Breast epithelium (tissue), 4 donors: ENCODE measurements at regions of chr6 and their contacts with region 1.

Region 1: GRCh38 chr6:168715643-168716481 is 274.9 kb downstream of the SMOC2 start:
- DNase-seq: no peak
- H3K4me3 ChIP-seq: no peak overlapping the region
- H3K27ac ChIP-seq: no peak overlapping the region
- H3K4me1 ChIP-seq: no peaks in the 10 kb centered on the region
- H3K27me3 ChIP-seq: no peaks in the 10 kb centered on the region
- CTCF ChIP-seq: no peak
- POLR2A ChIP-seq: no peak

Region 2: GRCh38 chr6:169064194-169064593 is 348.3 kb after region 1 on chr6:
- intact Hi-C with region 1: no loop called
- DNase-seq: no peak
- H3K4me3 ChIP-seq: no peak overlapping the region
- H3K27ac ChIP-seq: no peak overlapping the region
- H3K4me1 ChIP-seq: no peaks in the 10 kb centered on the region
- H3K27me3 ChIP-seq: no peaks in the 10 kb centered on the region
- CTCF ChIP-seq: no peak
- POLR2A ChIP-seq: no peak

Region 3: GRCh38 chr6:169439710-169440109 is 723.8 kb after region 1 on chr6:
- intact Hi-C with region 1: no loop called
- DNase-seq: no peak
- H3K4me3 ChIP-seq: no peak overlapping the region
- H3K27ac ChIP-seq: no peak overlapping the region
- H3K4me1 ChIP-seq: no peaks in the 10 kb centered on the region
- H3K27me3 ChIP-seq: no peaks in the 10 kb centered on the region
- CTCF ChIP-seq: no peak
- POLR2A ChIP-seq: no peak

Region 4: DNA sequence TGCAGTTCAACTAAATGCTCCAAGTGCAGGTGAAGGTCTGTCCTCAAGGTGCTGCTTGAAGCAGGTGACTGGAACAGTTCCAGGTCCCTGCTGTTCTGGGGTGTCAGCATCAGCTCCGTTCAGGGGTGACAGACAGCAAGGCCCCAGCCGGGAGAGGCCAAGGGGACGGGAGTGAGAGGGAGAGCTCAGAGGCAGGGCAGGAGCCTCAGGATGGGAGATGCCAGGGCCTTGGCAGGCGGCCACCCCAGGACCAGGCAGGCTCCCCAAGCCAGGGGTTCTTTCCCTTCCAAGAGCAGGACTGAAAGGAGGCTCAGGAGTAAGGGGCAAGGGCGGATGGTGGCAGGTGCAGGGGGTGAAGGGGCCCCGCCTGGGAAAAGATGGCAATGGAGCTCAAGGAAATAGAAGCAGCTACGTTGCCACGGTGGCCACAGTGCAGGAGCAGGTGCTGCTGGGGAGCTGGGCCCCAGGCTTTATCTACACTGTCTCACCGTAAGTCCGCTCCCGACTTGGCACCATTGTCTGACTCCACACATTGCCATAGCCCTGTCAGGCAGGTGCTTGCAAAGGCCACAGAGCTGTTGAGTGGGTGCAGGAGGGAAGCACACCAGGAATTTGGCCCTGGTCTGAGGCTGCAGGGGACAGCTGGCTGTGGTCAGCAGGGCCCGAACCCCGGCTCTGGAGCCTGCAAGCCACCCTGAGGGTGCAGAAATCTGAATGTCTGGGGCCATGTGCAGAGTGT is 1078.6 kb after region 1 on chr6:
- intact Hi-C with region 1: loop called (anchors 5 kb)
- DNase-seq: peak in 1 of 2 donors; percentile 12
- H3K4me3 ChIP-seq: no peak overlapping the region
- H3K27ac ChIP-seq: no peak overlapping the region
- H3K4me1 ChIP-seq: no peaks in the 10 kb centered on the region
- H3K27me3 ChIP-seq: no peaks in the 10 kb centered on the region
- CTCF ChIP-seq: no peak
- POLR2A ChIP-seq: no peak